Activated CD4-positive, alpha-beta T cell treated with anti-CD3 and anti-CD28 coated beads, Interleukin-2, amount 10 ng/mL, durations not matched to agents 24 days and 14 days (primary cell): ENCODE measurements at regions of chr4 and their contacts with region 1.

Region 1: DNA sequence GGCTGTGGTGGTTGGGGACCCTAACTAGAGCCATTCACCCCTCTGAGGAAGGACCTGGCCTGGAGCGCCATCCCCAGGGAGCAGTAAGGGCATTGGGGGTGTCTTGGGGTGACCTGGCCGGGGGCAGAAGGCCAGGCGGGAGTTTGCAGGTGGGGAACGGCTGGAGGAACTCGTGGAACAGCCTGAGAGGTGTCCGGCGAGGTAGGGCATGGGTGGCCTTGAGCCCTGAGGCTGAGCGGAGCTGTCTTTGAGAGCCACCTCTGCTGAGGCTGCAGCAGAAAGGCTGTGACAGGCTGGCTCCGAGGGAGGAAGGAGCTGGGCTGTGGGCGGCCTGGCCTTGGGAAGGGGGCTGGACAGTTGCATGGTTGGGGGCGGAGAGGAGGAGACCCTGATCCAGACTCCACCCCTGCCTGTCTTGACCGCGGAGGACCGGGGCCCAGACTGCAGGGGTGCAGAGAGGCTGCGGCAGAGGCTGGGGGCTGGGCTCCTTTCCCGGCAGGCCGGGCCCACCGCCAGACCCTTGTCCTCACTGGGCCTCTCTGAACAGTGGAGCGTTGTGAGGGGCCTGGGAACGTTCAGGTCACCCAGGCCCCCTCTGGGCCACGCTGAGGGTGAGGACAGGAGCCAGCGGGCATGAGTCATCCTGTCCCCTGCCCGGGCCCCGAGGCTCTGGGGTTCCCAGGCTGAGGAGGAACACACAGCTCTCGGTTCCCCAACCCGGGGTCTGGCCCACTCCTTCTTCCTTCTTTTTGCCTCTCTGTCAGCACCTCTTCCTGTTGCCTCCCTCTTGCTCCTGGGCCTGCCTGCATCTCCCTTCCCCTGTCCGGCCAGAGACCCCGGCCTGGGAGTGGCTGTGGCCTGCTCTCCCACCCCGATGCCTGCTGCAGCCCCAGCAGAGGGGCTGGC is 8.1 kb downstream of the SH3BP2 start:
- DNase-seq: peak; percentile 67
- H3K4me3 Mint-ChIP-seq: peak overlapping the region; percentile 87
- H3K27ac Mint-ChIP-seq: peak overlapping the region; percentile 73
- H3K4me1 Mint-ChIP-seq: peaks cover 47% of the 10 kb centered on the region
- H3K27me3 Mint-ChIP-seq: no peaks in the 10 kb centered on the region

Region 2: GRCh38 chr4:2761035-2761923 is 39.7 kb before region 1 on chr4:
- intact Hi-C with region 1: loop called (anchors 5 kb)
- DNase-seq: peak; percentile 69
- H3K4me3 Mint-ChIP-seq: no peak overlapping the region
- H3K27ac Mint-ChIP-seq: peak overlapping the region; percentile 67
- H3K4me1 Mint-ChIP-seq: peaks cover 11% of the 10 kb centered on the region
- H3K27me3 Mint-ChIP-seq: no peaks in the 10 kb centered on the region

Region 3: DNA sequence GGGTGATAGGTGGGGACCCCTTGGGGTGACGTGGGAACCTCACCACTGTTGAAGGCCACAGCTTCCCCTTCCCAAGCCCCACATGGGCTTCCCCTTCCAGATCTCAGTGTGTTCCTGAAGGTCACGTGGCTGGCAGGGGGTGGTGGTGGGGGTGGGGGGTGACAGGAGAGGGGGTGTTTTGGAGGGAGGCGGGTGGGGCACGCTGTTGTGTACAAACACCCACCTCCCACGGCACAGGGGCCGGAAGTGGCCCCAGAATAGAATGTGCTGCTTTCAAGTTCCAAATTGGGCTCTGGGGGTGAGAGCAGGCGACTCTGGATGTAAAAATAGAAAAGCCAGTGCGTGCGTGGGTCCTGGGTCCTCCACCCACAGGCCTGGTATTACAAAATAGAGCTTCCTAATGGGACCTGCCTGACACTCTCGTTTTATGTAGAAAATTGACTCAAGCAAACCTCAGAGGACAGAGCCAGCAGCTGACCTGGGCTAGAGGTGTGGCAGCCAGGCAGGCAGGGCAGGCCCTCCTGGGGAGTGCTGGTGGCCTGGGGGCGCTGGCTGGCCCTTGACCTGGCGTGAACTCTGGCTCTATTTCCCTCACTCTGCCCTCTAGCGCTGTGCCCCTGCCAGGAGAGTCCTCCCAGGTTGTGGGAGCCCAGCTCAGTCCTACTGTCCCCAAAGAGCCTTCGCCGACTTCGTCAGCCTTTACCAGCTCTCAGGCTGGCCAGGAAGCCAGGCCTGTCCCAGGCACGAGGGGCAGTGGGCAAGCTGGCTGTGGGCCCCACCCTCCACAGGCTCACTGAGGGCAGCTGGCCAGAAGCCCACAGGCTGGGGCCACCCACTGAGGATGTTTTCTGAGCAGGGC is 13.5 kb before region 1 on chr4:
- intact Hi-C with region 1: loop called (anchors 1 kb)
- DNase-seq: peak; percentile 85
- H3K4me3 Mint-ChIP-seq: peak overlapping the region; percentile 56
- H3K27ac Mint-ChIP-seq: peak overlapping the region; percentile 93
- H3K4me1 Mint-ChIP-seq: peaks cover 33% of the 10 kb centered on the region
- H3K27me3 Mint-ChIP-seq: peaks cover 4% of the 10 kb centered on the region

Region 4: DNA sequence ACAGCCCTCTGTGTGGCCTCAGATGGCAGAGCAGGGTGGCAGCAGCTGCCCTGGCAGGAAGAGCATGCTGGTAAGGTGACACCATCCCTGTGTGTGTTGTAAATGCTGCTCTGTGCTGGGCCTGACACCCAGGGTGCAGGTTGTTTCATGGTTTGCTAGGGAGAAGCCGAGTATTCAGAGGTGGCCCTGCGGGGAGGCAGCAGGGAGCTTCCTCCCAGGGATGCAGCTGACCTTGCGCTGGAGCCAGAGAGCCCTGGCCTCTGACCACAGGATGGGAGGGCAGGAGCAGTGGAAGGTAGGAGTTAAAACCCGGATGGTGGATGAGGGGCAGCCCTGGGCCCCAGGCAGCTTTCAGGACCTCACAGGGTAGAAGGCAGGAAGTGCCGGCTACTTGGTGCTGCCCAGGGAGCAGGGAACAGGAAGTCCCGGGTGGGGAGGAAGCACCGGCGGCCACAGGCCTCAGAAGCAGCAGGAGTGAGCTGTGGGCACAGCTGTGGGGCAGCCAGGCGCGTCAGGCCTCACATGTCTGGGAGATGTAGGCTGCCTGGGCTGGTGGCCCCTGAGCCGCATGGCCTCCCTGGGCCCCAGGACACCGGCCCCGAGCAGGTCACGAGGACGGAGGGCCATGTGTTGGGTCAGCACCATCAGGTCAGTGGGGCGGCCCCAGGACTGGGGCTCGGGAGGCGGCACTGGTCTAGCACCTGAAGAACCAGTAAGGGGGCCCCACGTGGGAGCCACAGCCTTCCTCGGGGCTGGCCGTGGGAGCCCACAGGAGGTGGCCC is 11.1 kb after region 1 on chr4:
- intact Hi-C with region 1: loop called (anchors 1 kb)
- DNase-seq: peak; percentile 90
- H3K4me3 Mint-ChIP-seq: peak overlapping the region; percentile 89
- H3K27ac Mint-ChIP-seq: peak overlapping the region; percentile 96
- H3K4me1 Mint-ChIP-seq: peaks cover 52% of the 10 kb centered on the region
- H3K27me3 Mint-ChIP-seq: no peaks in the 10 kb centered on the region

Region 5: GRCh38 chr4:2843263-2843940 is 42.5 kb after region 1 on chr4 and contains the start of gene ADD1:
- intact Hi-C with region 1: loop called (anchors 2 kb)
- DNase-seq: peak; percentile 100
- H3K4me3 Mint-ChIP-seq: peak within 1 kb of the TSS; percentile 91
- H3K27ac Mint-ChIP-seq: peak within 1 kb of the TSS; percentile 92
- H3K4me1 Mint-ChIP-seq: peaks cover 41% of the 10 kb centered on the region
- H3K27me3 Mint-ChIP-seq: no peaks in the 10 kb centered on the region
- total RNA-seq, gene ADD1: 187 and 198 TPM in 2 replicates